ENCODE measurements at regions of chr2 and their contacts with region 1.

Region 1: DNA sequence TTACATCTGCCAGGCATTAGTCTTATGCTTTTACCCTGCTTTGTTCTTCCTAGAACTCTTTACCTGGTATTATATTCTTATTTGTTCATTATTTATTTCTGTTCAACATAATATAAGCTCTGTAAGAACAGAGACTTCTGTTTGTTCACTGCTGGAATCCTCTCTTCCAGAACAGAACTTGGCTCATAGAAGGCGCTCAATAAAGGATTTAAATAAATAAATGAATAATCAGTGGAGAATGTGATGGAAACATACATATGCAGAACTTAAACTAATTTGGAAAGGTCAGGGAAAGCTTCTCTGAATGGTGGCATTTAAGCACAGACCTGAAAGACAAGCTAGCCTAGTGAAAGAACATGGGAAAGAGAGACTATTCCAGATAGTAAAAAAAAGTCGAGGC is 24.3 kb downstream of the NCKAP1 start:
- DNase-seq: no peak
- ATAC-seq: no peak
- H3K4me3 ChIP-seq: no peak overlapping the region
- H3K27ac ChIP-seq: no peak overlapping the region
- H3K4me1 ChIP-seq: peaks cover 5 to 34% of the 10 kb centered on the region in 2 experiments; a peak in 4 of 5 replicates
- H3K27me3 ChIP-seq: no peaks in the 10 kb centered on the region
- CTCF ChIP-seq: no peak
- EP300 ChIP-seq: no peak
- POLR2A ChIP-seq: no peak
- RAD21 ChIP-seq: no peak

Region 2: DNA sequence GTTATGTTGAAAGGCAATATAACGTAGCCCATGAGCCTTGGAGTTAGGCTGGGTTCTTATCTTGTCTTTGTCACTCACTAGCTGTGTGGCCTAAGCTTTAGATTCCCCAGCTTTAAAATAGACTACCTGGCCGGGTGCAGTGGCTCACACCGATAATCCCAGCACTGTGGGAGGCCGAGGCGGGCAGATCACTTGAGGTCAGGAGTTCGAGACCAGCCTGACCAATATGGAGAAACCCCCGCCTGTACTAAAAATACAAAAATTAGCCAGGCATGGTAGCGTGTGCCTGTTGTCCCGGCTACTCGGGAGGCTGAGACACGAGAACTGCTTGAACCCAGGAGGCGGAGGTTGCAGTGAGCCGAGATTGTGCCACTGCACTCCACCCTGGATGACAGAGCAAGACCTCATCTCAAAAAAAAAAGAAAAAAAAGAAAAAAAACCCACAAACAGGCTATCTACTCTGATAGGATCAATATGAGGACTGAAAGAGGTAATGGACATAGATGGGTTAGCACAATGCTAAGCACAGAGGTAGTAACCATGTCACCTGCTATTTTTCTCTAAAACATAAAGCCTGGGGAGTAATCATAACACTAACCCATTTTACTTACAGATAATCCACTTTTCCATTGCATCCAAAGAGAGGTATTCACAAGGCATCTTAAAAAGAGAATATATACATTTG is 19.6 kb before region 1 on chr2:
- CTCF ChIA-PET with region 1: no interaction called
- POLR2A ChIA-PET with region 1: interaction called, 13 read pairs
- in situ Hi-C with region 1: no loop called
- intact Hi-C with region 1: no loop called
- DNase-seq: peak in 2 of 4 experiments; percentile 55 to 87
- ATAC-seq: peak; percentile 94
- H3K4me3 ChIP-seq: no peak overlapping the region
- H3K27ac ChIP-seq: peak overlapping the region; percentile 26; the same call in 2 of the 3 replicates
- H3K4me1 ChIP-seq: peaks cover 5 to 9% of the 10 kb centered on the region in 2 experiments; a peak in 4 of 5 replicates
- H3K27me3 ChIP-seq: no peaks in the 10 kb centered on the region
- CTCF ChIP-seq: no peak
- EP300 ChIP-seq: peak; percentile 11; the same call in 1 of the 2 replicates
- POLR2A ChIP-seq: peak; percentile 40; the same call in 1 of the 2 replicates
- RAD21 ChIP-seq: no peak

Region 3: DNA sequence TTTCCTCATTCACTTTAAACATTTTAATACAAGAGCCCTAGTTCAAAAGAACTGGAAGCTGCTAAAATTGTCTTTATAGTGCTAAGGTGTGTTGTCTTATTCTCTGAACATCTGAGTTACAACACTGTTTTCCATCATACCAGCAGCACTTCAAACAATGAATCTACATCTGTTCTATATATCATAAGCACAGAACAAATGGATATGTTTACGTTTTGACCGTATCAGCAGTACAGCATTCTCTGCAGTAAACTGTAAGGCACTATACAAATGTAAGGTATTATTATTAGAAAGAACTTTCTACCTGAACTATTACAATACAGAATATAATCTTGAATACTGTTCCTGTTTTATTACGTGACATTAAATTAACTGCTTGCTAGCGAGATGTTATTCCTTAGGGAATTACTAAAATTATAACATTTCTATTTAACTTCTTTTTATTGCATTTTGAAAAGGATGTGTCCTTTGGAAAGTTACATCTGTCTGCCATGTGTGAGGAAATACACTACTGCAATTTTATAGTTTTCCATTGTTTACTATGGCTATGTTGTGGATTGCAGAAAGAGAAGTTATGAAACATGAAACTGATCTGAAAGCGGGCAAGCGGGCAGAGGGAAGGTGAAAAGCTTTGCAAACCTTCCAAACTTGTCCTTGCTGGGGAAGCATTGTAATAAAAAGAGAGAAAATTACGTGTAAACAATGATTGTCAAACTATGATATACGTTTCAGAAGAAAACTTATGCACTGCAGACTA is 10.5 kb after region 1 on chr2:
- CTCF ChIA-PET with region 1: no interaction called
- POLR2A ChIA-PET with region 1: interaction called, 13 read pairs
- in situ Hi-C with region 1: no loop called
- intact Hi-C with region 1: no loop called
- DNase-seq: no peak
- ATAC-seq: peak; percentile 48
- H3K4me3 ChIP-seq: no peak overlapping the region
- H3K27ac ChIP-seq: no peak overlapping the region
- H3K4me1 ChIP-seq: peaks cover 0 to 3% of the 10 kb centered on the region in 2 experiments; a peak in 2 of 5 replicates
- H3K27me3 ChIP-seq: no peaks in the 10 kb centered on the region
- CTCF ChIP-seq: no peak
- EP300 ChIP-seq: no peak
- POLR2A ChIP-seq: no peak
- RAD21 ChIP-seq: no peak

Region 4: GRCh38 chr2:183614799-183615435 is 600.9 kb after region 1 on chr2:
- CTCF ChIA-PET with region 1: no interaction called
- POLR2A ChIA-PET with region 1: no interaction called
- in situ Hi-C with region 1: no loop called
- intact Hi-C with region 1: no loop called
- DNase-seq: no peak
- ATAC-seq: no peak
- H3K4me3 ChIP-seq: no peak overlapping the region
- H3K27ac ChIP-seq: no peak overlapping the region
- H3K4me1 ChIP-seq: no peaks in the 10 kb centered on the region
- H3K27me3 ChIP-seq: no peaks in the 10 kb centered on the region
- CTCF ChIP-seq: no peak
- EP300 ChIP-seq: no peak
- POLR2A ChIP-seq: no peak
- RAD21 ChIP-seq: no peak

Region 5: GRCh38 chr2:183656121-183656520 is 642.1 kb after region 1 on chr2:
- CTCF ChIA-PET with region 1: no interaction called
- POLR2A ChIA-PET with region 1: no interaction called
- in situ Hi-C with region 1: no loop called
- intact Hi-C with region 1: no loop called
- DNase-seq: no peak
- ATAC-seq: no peak
- H3K4me3 ChIP-seq: no peak overlapping the region
- H3K27ac ChIP-seq: no peak overlapping the region
- H3K4me1 ChIP-seq: no peaks in the 10 kb centered on the region
- H3K27me3 ChIP-seq: no peaks in the 10 kb centered on the region
- CTCF ChIP-seq: no peak
- EP300 ChIP-seq: no peak
- POLR2A ChIP-seq: no peak
- RAD21 ChIP-seq: no peak

Measured in K562 (cell line).